ENCODE measurements at regions of chr19 and their contacts with region 1.

Region 1: GRCh38 chr19:35693830-35694599 is 10.3 kb upstream of the ZBTB32 start:
- DNase-seq: no peak
- H3K4me3 ChIP-seq: no peak overlapping the region
- CTCF ChIP-seq: peak; percentile 96

Region 2: DNA sequence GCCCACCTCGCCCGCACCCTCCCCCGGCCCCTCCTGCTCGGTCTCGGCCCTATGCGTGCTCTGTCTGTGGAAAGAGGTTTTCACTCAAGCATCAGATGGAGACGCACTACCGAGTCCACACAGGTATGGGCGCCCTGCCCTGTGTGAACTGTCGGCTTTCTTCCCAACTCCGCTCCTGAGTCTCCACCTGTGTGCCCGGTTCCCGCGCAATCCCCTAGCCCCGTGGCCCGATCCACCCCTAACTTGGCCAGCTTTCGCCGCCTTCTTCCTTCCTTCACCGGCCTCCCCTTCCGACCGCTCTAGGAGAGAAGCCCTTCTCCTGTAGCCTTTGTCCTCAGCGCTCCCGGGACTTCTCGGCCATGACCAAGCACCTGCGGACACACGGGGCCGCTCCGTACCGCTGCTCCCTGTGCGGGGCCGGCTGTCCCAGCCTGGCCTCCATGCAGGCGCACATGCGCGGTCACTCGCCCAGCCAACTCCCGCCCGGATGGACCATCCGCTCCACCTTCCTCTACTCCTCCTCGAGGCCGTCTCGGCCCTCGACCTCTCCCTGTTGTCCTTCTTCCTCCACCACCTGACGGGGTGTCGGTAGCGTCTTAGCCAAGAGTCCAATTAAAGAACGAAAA is 22.3 kb after region 1 on chr19:
- CTCF ChIA-PET with region 1: interaction called, 19 read pairs
- POLR2A ChIA-PET with region 1: no interaction called
- DNase-seq: no peak
- H3K4me3 ChIP-seq: peak overlapping the region; percentile 85
- CTCF ChIP-seq: no peak

Region 3: DNA sequence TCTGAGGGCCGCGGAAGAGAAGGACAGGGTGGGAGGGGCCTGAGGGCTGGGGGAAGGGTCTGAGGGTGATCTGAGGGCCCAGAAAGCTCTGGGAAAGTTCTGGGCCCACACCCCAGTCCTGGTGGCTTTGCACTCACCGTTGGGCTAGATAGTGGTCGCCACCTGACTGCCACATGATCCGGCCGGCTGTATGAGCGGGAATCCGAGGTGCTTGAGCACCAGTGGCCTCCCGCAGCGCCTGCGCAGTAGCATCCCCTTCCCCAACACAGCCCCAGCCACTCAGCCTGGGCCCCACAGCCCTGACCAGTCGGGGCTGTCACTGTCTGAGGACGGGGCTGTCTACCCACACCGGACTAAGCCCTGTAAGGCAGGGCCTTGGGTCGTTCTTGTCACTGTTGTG is 103.6 kb after region 1 on chr19:
- CTCF ChIA-PET with region 1: no interaction called
- POLR2A ChIA-PET with region 1: no interaction called
- DNase-seq: no peak
- H3K4me3 ChIP-seq: no peak overlapping the region
- CTCF ChIP-seq: no peak

Measured in AG04449 (cell line).